CD4-positive, alpha-beta memory T cell (primary cell): ENCODE measurements at regions of chr2 and their contacts with region 1.

Region 1: DNA sequence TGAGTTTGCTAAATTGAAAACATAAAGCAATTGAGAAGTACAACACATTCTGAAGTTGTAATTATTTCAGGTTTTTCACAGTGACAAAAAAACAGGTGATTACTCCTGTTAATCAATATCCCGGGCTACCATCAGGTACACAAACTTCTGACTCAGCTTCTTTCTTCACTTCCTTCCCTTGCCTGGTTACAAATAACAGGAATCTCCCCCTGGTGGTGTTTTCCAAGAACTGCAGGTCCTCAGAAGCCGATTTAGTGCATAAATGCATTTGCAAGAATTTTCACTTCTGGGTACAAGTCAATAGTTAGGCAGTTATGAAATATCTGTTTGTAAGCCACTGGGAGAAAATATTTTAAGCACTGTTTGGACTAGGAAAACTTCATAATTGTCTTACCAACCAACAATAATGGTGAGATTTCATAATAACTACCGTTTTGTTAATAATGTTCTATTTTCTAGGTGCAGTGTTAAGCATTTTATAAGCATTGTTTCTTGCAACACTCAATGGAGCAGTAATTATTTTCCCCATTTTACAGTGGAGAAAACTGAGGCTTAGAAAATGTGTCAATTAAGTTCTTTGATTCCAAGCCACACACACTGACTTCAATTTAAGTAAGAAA is 12.4 kb upstream of the GMCL1 start:
- DNase-seq: peak; percentile 76 to 86 (median 80)
- H3K4me3 ChIP-seq: no peak overlapping the region
- H3K4me3 Mint-ChIP-seq: no peak overlapping the region
- H3K27ac ChIP-seq: no peak overlapping the region
- H3K27ac Mint-ChIP-seq: no peak overlapping the region
- H3K4me1 ChIP-seq: peaks cover 7% of the 10 kb centered on the region
- H3K4me1 Mint-ChIP-seq: peaks cover 3 to 5% (median 4%) of the 10 kb centered on the region in 4 donors
- H3K27me3 ChIP-seq: no peaks in the 10 kb centered on the region
- H3K27me3 Mint-ChIP-seq: no peaks in the 10 kb centered on the region

Region 2: GRCh38 chr2:69559442-69560146 is 257.4 kb before region 1 on chr2:
- CTCF ChIA-PET with region 1: interaction called, 23 read pairs
- POLR2A ChIA-PET with region 1: no interaction called
- intact Hi-C with region 1: loop called (anchors 1 kb)
- DNase-seq: peak in 3 of 5 donors; percentile 24 to 26 (median 24)
- H3K4me3 ChIP-seq: no peak overlapping the region
- H3K4me3 Mint-ChIP-seq: peak overlapping the region in 5 of 8 donors; percentile 5 to 50 (median 32)
- H3K27ac ChIP-seq: no peak overlapping the region
- H3K27ac Mint-ChIP-seq: peak overlapping the region in 5 of 7 donors; percentile 30 to 73 (median 68)
- H3K4me1 ChIP-seq: peaks cover 96% of the 10 kb centered on the region
- H3K4me1 Mint-ChIP-seq: peaks cover 56 to 94% (median 77%) of the 10 kb centered on the region in 4 donors
- H3K27me3 ChIP-seq: no peaks in the 10 kb centered on the region
- H3K27me3 Mint-ChIP-seq: no peaks in the 10 kb centered on the region

Region 3: DNA sequence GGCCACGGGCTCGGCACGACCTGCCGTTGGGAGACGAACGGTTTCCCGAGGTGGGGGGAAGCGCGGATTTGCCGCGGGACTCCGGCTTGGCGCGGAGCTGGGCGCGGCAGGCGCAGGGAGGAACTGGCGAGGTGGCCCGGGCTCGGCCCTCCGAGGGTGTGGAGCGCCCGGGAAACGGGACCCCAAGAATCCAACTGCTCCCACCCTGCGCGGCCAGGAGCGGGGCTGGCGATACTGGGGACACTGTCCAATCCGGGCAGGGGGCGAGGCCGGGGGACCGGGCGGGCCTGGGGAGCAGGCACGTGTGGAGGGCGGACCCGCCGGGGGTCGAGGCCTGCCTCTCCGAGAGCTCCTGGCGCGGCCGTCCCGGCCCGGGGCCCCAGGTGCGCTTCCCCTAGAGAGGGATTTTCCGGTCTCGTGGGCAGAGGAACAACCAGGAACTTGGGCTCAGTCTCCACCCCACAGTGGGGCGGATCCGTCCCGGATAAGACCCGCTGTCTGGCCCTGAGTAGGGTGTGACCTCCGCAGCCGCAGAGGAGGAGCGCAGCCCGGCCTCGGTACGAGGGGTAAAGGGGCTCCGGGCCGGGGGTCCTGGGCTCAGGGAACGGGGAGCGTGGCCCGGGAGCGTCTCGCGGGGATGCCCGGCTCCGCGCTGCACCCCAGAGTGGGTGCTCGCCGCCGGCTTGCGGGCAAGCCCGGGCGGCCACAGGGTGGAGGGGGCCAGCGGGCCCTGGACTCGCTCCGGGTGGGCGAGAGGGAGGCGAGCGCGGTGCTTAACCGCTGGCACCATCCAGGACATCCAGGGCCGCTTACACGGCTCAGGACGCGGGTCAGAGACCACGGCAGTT is 75.2 kb before region 1 on chr2 and contains the start of gene ANXA4:
- CTCF ChIA-PET with region 1: interaction called, 13 read pairs
- POLR2A ChIA-PET with region 1: interaction called, 4 read pairs
- intact Hi-C with region 1: loop called (anchors 5 kb)
- DNase-seq: peak; percentile 38 to 78 (median 52)
- H3K4me3 ChIP-seq: peak within 1 kb of the TSS; percentile 73 to 83
- H3K4me3 Mint-ChIP-seq: peak within 1 kb of the TSS; percentile 88 to 99 (median 96)
- H3K27ac ChIP-seq: peak within 1 kb of the TSS; percentile 58
- H3K27ac Mint-ChIP-seq: peak within 1 kb of the TSS; percentile 62 to 95 (median 93)
- H3K4me1 ChIP-seq: peaks cover 14% of the 10 kb centered on the region
- H3K4me1 Mint-ChIP-seq: peaks cover 13 to 25% (median 17%) of the 10 kb centered on the region in 4 donors
- H3K27me3 ChIP-seq: no peaks in the 10 kb centered on the region
- H3K27me3 Mint-ChIP-seq: no peaks in the 10 kb centered on the region
- total RNA-seq, gene ANXA4: 22.3 to 24.2 TPM

Region 4: GRCh38 chr2:69804416-69804815 is 12.6 kb before region 1 on chr2:
- CTCF ChIA-PET with region 1: interaction called, 39 read pairs
- POLR2A ChIA-PET with region 1: interaction called, 3 read pairs
- intact Hi-C with region 1: no loop called
- DNase-seq: peak in 1 of 5 donors; percentile 1
- H3K4me3 ChIP-seq: no peak overlapping the region
- H3K4me3 Mint-ChIP-seq: peak overlapping the region in 3 of 8 donors; percentile 4 to 63 (median 47)
- H3K27ac ChIP-seq: no peak overlapping the region
- H3K27ac Mint-ChIP-seq: peak overlapping the region in 6 of 7 donors; percentile 15 to 86 (median 62)
- H3K4me1 ChIP-seq: peaks cover 6% of the 10 kb centered on the region
- H3K4me1 Mint-ChIP-seq: peaks cover 9 to 22% (median 14%) of the 10 kb centered on the region in 4 donors
- H3K27me3 ChIP-seq: no peaks in the 10 kb centered on the region
- H3K27me3 Mint-ChIP-seq: no peaks in the 10 kb centered on the region